Esophagus muscularis mucosa (tissue), 4 donors: ENCODE measurements at regions of chr18 and their contacts with region 1.

Region 1: GRCh38 chr18:2536493-2536892 is 34.8 kb downstream of the METTL4 start:
- DNase-seq: no peak
- H3K4me3 ChIP-seq: no peak overlapping the region
- H3K27ac ChIP-seq: no peak overlapping the region
- H3K4me1 ChIP-seq: peaks cover 0 to 7% (median 0%) of the 10 kb centered on the region in 4 donors
- H3K27me3 ChIP-seq: no peaks in the 10 kb centered on the region
- CTCF ChIP-seq: no peak
- EP300 ChIP-seq: no peak
- POLR2A ChIP-seq: no peak

Region 2: GRCh38 chr18:2337552-2338141 is 198.8 kb before region 1 on chr18:
- intact Hi-C with region 1: loop called (anchors 10 kb)
- DNase-seq: no peak
- H3K4me3 ChIP-seq: no peak overlapping the region
- H3K27ac ChIP-seq: no peak overlapping the region
- H3K4me1 ChIP-seq: no peaks in the 10 kb centered on the region
- H3K27me3 ChIP-seq: peaks cover 0 to 3% (median 0%) of the 10 kb centered on the region in 4 donors
- CTCF ChIP-seq: peak; percentile 9 to 49 (median 34)
- EP300 ChIP-seq: no peak
- POLR2A ChIP-seq: no peak